HCT116 (cell line): ENCODE measurements at regions of chr3 and their contacts with region 1.

Region 1: DNA sequence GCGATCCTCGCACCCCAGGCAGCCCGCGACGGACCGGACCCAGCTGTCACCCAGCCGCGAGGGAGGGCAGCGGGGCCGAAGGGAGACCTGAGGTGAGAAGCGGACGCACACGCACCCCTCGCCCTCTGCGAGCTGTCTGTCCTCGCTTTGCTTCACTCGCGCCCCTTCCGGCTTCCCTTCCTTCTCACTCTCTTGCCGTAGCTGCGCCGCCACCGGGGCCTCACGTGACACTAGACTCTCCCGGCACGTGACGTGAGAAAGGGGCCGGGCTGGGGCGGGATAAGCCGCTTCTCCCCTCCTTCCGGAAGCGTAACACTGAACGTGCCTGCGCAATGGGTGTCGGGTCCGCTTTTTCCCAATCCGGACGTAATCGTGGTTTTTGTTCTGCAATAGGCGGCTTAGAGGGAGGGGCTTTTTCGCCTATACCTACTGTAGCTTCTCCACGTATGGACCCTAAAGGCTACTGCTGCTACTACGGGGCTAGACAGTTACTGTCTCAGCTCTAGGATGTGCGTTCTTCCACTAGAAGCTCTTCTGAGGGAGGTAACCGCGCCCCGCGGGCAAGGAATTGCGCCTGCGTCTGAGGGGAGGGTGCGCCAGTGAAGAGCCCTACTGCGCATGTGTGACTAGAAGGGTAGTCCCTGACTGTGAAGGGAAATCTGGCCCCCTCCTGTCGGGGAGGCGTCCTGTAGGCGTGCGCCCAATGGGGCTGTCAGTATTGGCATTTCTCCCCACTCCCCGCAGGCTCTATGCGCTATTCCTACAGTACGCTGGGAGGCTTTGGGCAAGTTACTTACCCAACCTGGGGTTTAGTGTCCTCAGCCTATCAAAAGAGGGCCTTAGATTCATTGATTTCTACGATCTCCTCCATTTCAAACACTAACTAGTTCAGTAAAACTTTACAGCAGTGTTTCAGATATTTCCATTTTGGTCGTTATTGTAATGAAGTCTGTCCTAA is at the starts of genes ATG3 and SLC35A5:
- DNase-seq: peak; percentile 96
- ATAC-seq: peak; percentile 88
- H3K4me3 ChIP-seq: peak within 1 kb of the TSS; percentile 80 to 94
- H3K27ac ChIP-seq: peak within 1 kb of the TSS; percentile 75
- H3K4me1 ChIP-seq: peaks cover 9 to 11% of the 10 kb centered on the region in 2 experiments; a peak in 3 of 4 replicates
- H3K27me3 ChIP-seq: no peaks in the 10 kb centered on the region
- CTCF ChIP-seq: 0 out of 6 replicates have a peak, but pooled peaks of 1 of the 3 experiments have one; percentile 11
- POLR2A ChIP-seq: peak; percentile 76
- RAD21 ChIP-seq: no peak
- total RNA-seq, gene ATG3: 56.4 TPM
- total RNA-seq, gene SLC35A5: 21.4 TPM

Region 2: DNA sequence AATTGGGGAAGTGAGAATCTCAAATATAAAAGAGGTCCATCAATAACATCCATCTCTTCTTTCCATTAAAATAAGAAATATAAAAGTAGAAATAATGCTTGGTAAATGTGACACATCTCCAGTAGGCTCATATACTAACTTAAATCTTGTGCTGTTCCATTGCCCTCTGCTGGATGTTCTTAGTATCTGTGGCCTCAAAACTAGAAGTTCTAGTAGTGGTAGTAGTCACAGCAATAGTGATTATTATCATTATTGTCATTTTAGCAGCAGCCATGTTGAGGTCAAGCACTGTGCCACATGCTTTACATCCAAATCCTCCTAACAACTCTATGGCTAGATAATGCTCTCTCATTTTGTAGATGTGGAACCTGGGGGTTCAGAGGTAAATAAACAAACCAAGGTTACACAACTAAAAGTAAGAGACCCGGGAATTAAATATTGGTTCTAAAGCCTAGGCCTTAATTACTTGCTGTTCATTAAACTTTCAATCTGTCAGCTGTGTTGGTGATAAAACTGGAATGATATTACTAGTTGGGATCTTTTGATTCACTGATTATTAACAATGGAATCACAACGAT is 42.5 kb before region 1 on chr3:
- CTCF ChIA-PET with region 1: no interaction called
- POLR2A ChIA-PET with region 1: no interaction called
- RAD21 ChIA-PET with region 1: no interaction called
- intact Hi-C with region 1: no loop called
- DNase-seq: peak; percentile 51
- ATAC-seq: peak; percentile 90
- H3K4me3 ChIP-seq: no peak overlapping the region
- H3K27ac ChIP-seq: no peak overlapping the region
- H3K4me1 ChIP-seq: no peaks in the 10 kb centered on the region
- H3K27me3 ChIP-seq: no peaks in the 10 kb centered on the region
- CTCF ChIP-seq: peak; percentile 68 to 76 (median 69)
- POLR2A ChIP-seq: no peak
- RAD21 ChIP-seq: peak; percentile 83

Region 3: DNA sequence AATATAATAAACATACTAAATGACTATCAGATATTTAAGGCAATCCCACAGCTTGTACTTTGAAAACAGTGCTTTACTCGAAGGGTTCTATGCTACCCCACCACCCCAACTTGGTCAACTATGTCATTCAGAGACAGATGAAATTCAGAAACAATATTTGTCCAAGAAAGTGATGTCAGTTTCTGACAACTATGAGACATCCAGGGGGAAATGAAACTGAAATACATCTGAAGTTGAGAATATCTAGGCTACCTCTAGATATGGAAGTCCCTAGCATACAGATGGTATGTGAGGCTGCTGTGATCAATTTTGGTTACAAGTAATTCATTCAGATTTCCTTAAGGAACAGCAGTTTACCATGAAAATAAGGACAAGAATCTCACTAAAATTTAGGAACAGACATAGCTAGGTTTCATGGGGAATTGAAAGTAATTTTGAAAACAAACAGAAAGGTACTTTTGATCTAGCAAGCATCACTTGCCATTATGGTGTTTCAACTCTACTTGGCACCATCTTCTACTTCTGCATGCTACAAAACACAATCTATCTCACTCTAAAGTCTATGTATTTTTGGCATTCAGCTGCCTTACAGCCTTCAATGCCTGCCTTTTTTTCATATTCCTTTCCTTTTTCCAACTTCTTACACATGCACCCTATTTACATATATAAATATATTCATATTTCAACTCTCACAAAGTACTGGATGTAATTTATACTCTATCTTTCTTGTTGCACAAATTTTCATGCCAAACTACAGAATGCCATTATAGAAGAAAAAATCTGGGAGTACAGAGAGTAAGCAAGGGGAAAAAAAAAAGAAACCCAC is 22.0 kb before region 1 on chr3:
- CTCF ChIA-PET with region 1: no interaction called
- POLR2A ChIA-PET with region 1: no interaction called
- RAD21 ChIA-PET with region 1: no interaction called
- intact Hi-C with region 1: loop called (anchors 1 kb)
- DNase-seq: no peak
- ATAC-seq: no peak
- H3K4me3 ChIP-seq: no peak overlapping the region
- H3K27ac ChIP-seq: no peak overlapping the region
- H3K4me1 ChIP-seq: no peaks in the 10 kb centered on the region
- H3K27me3 ChIP-seq: no peaks in the 10 kb centered on the region
- CTCF ChIP-seq: no peak
- POLR2A ChIP-seq: no peak
- RAD21 ChIP-seq: no peak

Region 4: GRCh38 chr3:112873632-112874031 is 311.6 kb after region 1 on chr3:
- CTCF ChIA-PET with region 1: no interaction called
- POLR2A ChIA-PET with region 1: no interaction called
- RAD21 ChIA-PET with region 1: no interaction called
- intact Hi-C with region 1: no loop called
- DNase-seq: no peak
- ATAC-seq: no peak
- H3K4me3 ChIP-seq: no peak overlapping the region
- H3K27ac ChIP-seq: no peak overlapping the region
- H3K4me1 ChIP-seq: no peaks in the 10 kb centered on the region
- H3K27me3 ChIP-seq: no peaks in the 10 kb centered on the region
- CTCF ChIP-seq: no peak
- POLR2A ChIP-seq: no peak
- RAD21 ChIP-seq: no peak

Region 5: GRCh38 chr3:112990672-112991602 is 428.9 kb after region 1 on chr3 and contains the start of gene GTPBP8:
- CTCF ChIA-PET with region 1: no interaction called
- POLR2A ChIA-PET with region 1: no interaction called
- RAD21 ChIA-PET with region 1: no interaction called
- intact Hi-C with region 1: loop called (anchors 5 kb)
- DNase-seq: peak; percentile 86
- ATAC-seq: peak; percentile 96
- H3K4me3 ChIP-seq: peak within 1 kb of the TSS; percentile 80 to 87
- H3K27ac ChIP-seq: peak within 1 kb of the TSS; percentile 81
- H3K4me1 ChIP-seq: peaks cover 8 to 17% of the 10 kb centered on the region in 2 experiments
- H3K27me3 ChIP-seq: no peaks in the 10 kb centered on the region
- CTCF ChIP-seq: no peak
- POLR2A ChIP-seq: peak; percentile 92
- RAD21 ChIP-seq: no peak
- total RNA-seq, gene GTPBP8: 16.4 TPM